ENCODE measurements at regions of chr19 and their contacts with region 1.

Region 1: GRCh38 chr19:15091901-15092753 is 10.1 kb downstream of the OR1I1 start:
- DNase-seq: peak; percentile 66
- ATAC-seq: peak; percentile 78
- H3K4me3 ChIP-seq: no peak overlapping the region
- H3K27ac ChIP-seq: no peak overlapping the region
- H3K4me1 ChIP-seq: peaks cover 0 to 4% of the 10 kb centered on the region in 2 experiments; a peak in 1 of 4 replicates
- H3K27me3 ChIP-seq: peaks cover 14% of the 10 kb centered on the region; the same call in 1 of the 2 replicates
- CTCF ChIP-seq: peak; percentile 56 to 83 (median 79)
- POLR2A ChIP-seq: no peak
- RAD21 ChIP-seq: peak; percentile 80

Region 2: GRCh38 chr19:14786421-14786851 is 305.7 kb before region 1 on chr19:
- CTCF ChIA-PET with region 1: interaction called, 15 read pairs
- POLR2A ChIA-PET with region 1: no interaction called
- RAD21 ChIA-PET with region 1: no interaction called
- intact Hi-C with region 1: no loop called
- DNase-seq: no peak
- ATAC-seq: peak; percentile 84
- H3K4me3 ChIP-seq: peak overlapping the region; percentile 22 to 39
- H3K27ac ChIP-seq: no peak overlapping the region
- H3K4me1 ChIP-seq: peaks cover 14 to 24% of the 10 kb centered on the region in 2 experiments; a peak in 3 of 4 replicates
- H3K27me3 ChIP-seq: no peaks in the 10 kb centered on the region
- CTCF ChIP-seq: peak; percentile 70 to 95 (median 90); a peak in 5 of 6 replicates
- POLR2A ChIP-seq: no peak
- RAD21 ChIP-seq: peak; percentile 85

Region 3: DNA sequence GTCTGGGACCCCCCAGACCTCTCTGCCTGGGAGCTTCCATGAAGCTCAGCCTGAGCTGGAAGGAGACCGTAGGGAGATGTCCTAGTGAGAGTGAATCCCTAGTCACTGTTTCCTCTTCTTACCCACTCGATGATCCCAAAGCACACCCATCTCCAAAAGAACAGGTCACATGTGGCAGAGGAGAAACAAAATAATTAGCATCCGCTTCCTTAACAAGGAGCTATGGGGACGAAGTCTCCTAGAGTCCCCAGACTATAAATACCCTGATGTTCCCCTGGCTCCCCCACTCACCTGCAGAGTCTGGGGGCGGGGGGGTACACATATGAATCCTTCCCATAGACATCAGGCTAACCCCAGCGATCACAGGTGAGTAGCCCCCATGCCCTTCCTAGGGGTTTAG is 10.2 kb before region 1 on chr19 and contains the start of gene OR1I1:
- CTCF ChIA-PET with region 1: interaction called, 11 read pairs
- POLR2A ChIA-PET with region 1: interaction called, 4 read pairs
- RAD21 ChIA-PET with region 1: no interaction called
- intact Hi-C with region 1: no loop called
- DNase-seq: no peak
- ATAC-seq: no peak
- H3K4me3 ChIP-seq: no peak within 1 kb of the TSS
- H3K27ac ChIP-seq: no peak within 1 kb of the TSS
- H3K4me1 ChIP-seq: no peaks in the 10 kb centered on the region
- H3K27me3 ChIP-seq: peaks cover 32% of the 10 kb centered on the region
- CTCF ChIP-seq: no peak
- POLR2A ChIP-seq: no peak
- RAD21 ChIP-seq: no peak
- total RNA-seq, gene OR1I1: not detected

Region 4: DNA sequence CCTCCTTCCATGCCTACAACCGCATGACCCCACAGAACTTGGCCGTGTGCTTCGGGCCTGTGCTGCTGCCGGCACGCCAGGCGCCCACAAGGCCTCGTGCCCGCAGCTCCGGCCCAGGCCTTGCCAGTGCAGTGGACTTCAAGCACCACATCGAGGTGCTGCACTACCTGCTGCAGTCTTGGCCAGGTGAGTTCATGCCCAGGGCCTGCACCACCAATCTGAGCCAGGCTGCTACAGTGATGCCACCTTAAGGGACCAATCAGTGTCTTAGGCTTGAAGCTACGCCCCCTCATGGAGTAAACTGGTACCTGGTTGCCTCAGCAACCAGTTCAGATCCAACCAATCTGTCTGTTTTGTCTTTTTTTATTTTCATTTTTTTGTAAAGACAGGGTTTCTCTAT is 20.3 kb after region 1 on chr19:
- CTCF ChIA-PET with region 1: no interaction called
- POLR2A ChIA-PET with region 1: no interaction called
- RAD21 ChIA-PET with region 1: no interaction called
- intact Hi-C with region 1: no loop called
- DNase-seq: peak; percentile 60
- ATAC-seq: peak; percentile 81
- H3K4me3 ChIP-seq: no peak overlapping the region
- H3K27ac ChIP-seq: no peak overlapping the region
- H3K4me1 ChIP-seq: peaks cover 0 to 9% of the 10 kb centered on the region in 2 experiments; a peak in 2 of 4 replicates
- H3K27me3 ChIP-seq: no peaks in the 10 kb centered on the region
- CTCF ChIP-seq: no peak
- POLR2A ChIP-seq: no peak
- RAD21 ChIP-seq: no peak

Region 5: GRCh38 chr19:15177269-15178116 is 85.4 kb after region 1 on chr19:
- CTCF ChIA-PET with region 1: interaction called, 10 read pairs
- POLR2A ChIA-PET with region 1: no interaction called
- RAD21 ChIA-PET with region 1: interaction called in 1 of 2 experiments, 3 read pairs
- intact Hi-C with region 1: no loop called
- DNase-seq: no peak
- ATAC-seq: peak; percentile 89
- H3K4me3 ChIP-seq: no peak overlapping the region
- H3K27ac ChIP-seq: no peak overlapping the region
- H3K4me1 ChIP-seq: peaks cover 0 to 3% of the 10 kb centered on the region in 2 experiments; a peak in 1 of 4 replicates
- H3K27me3 ChIP-seq: no peaks in the 10 kb centered on the region
- CTCF ChIP-seq: peak; percentile 64 to 78 (median 75)
- POLR2A ChIP-seq: no peak
- RAD21 ChIP-seq: peak; percentile 88

Region 6: DNA sequence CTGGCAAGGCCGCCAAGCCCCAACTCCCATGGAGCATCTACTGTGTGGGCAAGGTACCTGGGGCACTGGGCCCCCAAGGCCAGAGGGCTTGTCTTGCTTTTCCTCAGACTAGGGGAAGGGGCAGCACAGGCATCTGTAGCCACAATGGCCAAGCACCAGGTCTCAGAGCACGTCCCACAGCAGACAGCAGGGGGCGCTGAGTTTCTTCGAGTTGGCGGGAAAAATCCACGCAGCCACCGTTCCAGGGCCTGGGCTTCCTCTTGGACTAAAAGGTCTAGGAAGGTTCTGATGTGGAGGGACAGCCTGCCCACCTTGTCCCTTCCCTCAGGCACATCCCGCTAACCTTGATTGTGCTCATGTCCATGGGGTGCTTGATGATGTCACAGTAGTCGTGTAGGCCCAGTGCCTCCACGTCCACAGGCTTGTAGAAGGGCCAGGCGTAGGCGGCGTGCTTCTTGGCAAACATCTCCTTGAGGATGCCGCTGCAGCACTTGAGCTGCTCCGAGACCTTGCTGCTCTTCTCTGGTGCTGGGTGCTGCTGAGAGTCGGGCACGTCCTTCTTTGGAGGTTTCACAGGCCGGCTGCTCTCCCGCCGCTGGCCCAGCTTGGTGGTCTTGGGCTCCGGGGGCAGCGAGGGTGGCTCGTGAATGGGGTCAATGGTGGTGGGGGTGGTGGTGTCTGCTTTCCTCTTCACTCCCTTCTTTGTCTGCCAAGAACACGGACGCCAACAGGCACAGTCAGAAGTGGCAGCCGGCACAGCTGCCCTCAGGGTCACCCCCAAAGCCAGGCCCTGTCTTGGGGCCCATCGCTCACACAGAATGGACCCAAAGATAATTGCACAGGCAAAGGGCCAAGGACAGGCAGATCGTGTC is 172.2 kb after region 1 on chr19:
- CTCF ChIA-PET with region 1: interaction called, 12 read pairs
- POLR2A ChIA-PET with region 1: no interaction called
- RAD21 ChIA-PET with region 1: interaction called in 1 of 2 experiments, 3 read pairs
- intact Hi-C with region 1: loop called (anchors 2 kb)
- DNase-seq: peak; percentile 45
- ATAC-seq: peak; percentile 80
- H3K4me3 ChIP-seq: no peak overlapping the region
- H3K27ac ChIP-seq: no peak overlapping the region
- H3K4me1 ChIP-seq: no peaks in the 10 kb centered on the region
- H3K27me3 ChIP-seq: no peaks in the 10 kb centered on the region
- CTCF ChIP-seq: peak; percentile 81 to 90 (median 87); a peak in 5 of 6 replicates
- POLR2A ChIP-seq: no peak
- RAD21 ChIP-seq: peak; percentile 90

Region 7: GRCh38 chr19:16528073-16528472 is 1435.9 kb after region 1 on chr19:
- CTCF ChIA-PET with region 1: no interaction called
- POLR2A ChIA-PET with region 1: no interaction called
- RAD21 ChIA-PET with region 1: no interaction called
- intact Hi-C with region 1: no loop called
- DNase-seq: no peak
- ATAC-seq: peak; percentile 73
- H3K4me3 ChIP-seq: no peak overlapping the region
- H3K27ac ChIP-seq: no peak overlapping the region
- H3K4me1 ChIP-seq: no peaks in the 10 kb centered on the region
- H3K27me3 ChIP-seq: no peaks in the 10 kb centered on the region
- CTCF ChIP-seq: peak in 2 of 3 experiments; percentile 60 to 63; a peak in 4 of 6 replicates
- POLR2A ChIP-seq: no peak
- RAD21 ChIP-seq: peak; percentile 36; the same call in 1 of the 2 replicates

Measured in HCT116 (cell line).